HepG2 (cell line): ENCODE measurements at regions of chr5 and their contacts with region 1.

Region 1: GRCh38 chr5:177599731-177600507 is at the start of gene B4GALT7:
- DNase-seq: peak; percentile 50
- ATAC-seq: peak; percentile 89
- H3K4me3 ChIP-seq: peak within 1 kb of the TSS; percentile 84 to 89 (median 87)
- H3K27ac ChIP-seq: peak within 1 kb of the TSS; percentile 79
- H3K4me1 ChIP-seq: peaks cover 27% of the 10 kb centered on the region
- H3K27me3 ChIP-seq: no peaks in the 10 kb centered on the region
- CTCF ChIP-seq: no peak
- EP300 ChIP-seq: peak in 1 of 2 experiments; percentile 40; a peak in 2 of 4 replicates
- POLR2A ChIP-seq: peak; percentile 67 to 95
- RAD21 ChIP-seq: peak; percentile 62; the same call in 1 of the 2 replicates
- total RNA-seq, gene B4GALT7: 12.7 and 20.5 TPM in 2 replicates

Region 2: DNA sequence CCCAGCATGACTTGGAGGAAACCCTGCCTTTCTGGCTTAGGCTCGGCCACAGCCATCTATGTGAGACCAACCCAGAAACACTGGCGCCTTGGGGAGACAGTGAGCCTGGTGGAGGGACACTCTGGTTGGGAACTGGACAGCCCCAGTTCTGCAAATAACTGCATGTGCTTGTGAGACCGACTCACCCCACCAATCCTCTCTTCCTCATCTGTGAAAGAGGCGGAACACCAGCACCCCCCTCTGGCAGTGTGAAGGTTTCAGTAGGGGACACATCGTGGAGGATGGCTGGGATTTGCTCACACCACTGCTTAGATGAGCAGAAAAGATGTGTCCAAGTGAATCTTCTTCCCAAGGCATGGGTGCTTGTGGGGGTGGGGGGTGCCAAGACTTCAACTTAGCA is 470.0 kb after region 1 on chr5:
- CTCF ChIA-PET with region 1: no interaction called
- POLR2A ChIA-PET with region 1: no interaction called
- in situ Hi-C with region 1: loop called (anchors 25 kb)
- intact Hi-C with region 1: no loop called
- DNase-seq: peak; percentile 27
- ATAC-seq: peak; percentile 71
- H3K4me3 ChIP-seq: no peak overlapping the region
- H3K27ac ChIP-seq: no peak overlapping the region
- H3K4me1 ChIP-seq: peaks cover 6% of the 10 kb centered on the region; the same call in 1 of the 2 replicates
- H3K27me3 ChIP-seq: peaks cover 6 to 13% of the 10 kb centered on the region in 2 experiments; a peak in 4 of 5 replicates
- CTCF ChIP-seq: peak; percentile 67
- EP300 ChIP-seq: no peak
- POLR2A ChIP-seq: no peak
- RAD21 ChIP-seq: no peak